Dorsolateral prefrontal cortex (tissue), 120 donors: ENCODE measurements at regions of chr1 and their contacts with region 1.

Region 1: GRCh38 chr1:93635614-93636543 is 45.8 kb downstream of the BCAR3 start:
- DNase-seq: peak in 2 of 10 donors; percentile 52 to 62
- H3K4me3 ChIP-seq: no peak overlapping the region
- H3K27ac ChIP-seq: peak overlapping the region in 52 of 59 donors; percentile 11 to 83 (median 59)
- H3K27me3 ChIP-seq: no peaks in the 10 kb centered on the region
- CTCF ChIP-seq: peak in 2 of 56 donors; percentile 8 to 18

Region 2: GRCh38 chr1:93591676-93592550 is 44.0 kb before region 1 on chr1:
- intact Hi-C with region 1: no loop called
- DNase-seq: no peak
- H3K4me3 ChIP-seq: no peak overlapping the region
- H3K27ac ChIP-seq: no peak overlapping the region
- H3K27me3 ChIP-seq: peaks cover 0 to 6% (median 0%) of the 10 kb centered on the region in 45 donors
- CTCF ChIP-seq: no peak

Region 3: DNA sequence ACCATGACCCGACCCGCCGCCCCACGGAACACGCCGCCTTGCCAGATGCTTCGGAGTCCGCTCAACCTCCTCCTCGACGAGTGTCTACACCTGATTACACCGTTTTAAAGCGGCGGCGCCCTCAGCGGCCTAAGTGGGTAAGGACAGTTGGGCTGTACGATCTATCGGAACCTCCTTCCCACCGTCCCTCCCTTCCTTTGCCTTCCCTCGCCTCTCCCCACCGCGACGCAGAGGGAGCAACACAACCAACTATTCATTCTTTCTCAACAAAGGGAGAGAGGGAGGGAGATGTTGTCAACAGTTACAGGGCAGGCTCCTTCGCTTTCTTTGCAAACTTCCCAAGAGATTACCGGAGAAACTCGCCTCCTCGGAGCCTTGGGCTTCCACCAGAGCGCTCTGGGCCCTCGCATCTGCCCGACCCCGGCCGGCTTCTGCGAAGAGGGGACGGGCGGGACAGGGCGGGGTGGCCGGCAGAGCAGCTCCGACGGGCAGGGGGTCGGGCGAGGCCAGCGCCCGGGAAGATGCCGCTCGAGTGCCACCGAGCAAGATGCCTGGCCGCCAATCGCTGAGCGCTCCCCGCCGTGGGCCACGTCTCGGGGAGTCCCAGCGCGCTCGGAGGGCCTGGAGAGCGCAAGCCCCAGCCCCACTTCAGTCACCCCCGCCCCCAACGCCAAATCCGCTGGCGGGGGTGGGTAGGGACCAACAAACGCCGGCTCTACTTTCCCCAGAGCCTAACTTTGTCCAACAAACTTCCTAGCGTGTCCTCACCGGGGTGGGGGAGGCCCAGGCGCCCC is 45.1 kb after region 1 on chr1:
- intact Hi-C with region 1: loop called in 1 of 2 experiments (anchors 5 kb)
- DNase-seq: peak; percentile 44 to 74 (median 68)
- H3K4me3 ChIP-seq: peak overlapping the region; percentile 56 to 89 (median 76)
- H3K27ac ChIP-seq: peak overlapping the region in 55 of 59 donors; percentile 47 to 94 (median 82)
- H3K27me3 ChIP-seq: peaks cover 0 to 12% (median 0%) of the 10 kb centered on the region in 45 donors
- CTCF ChIP-seq: peak in 51 of 56 donors; percentile 19 to 56 (median 40)